Activated CD4-positive, alpha-beta memory T cell treated with anti-CD3 and anti-CD28 coated beads, Interleukin-2, amount 10 ng/mL, durations not matched to agents 7 days and 5 days (primary cell): ENCODE measurements at regions of chr12 and their contacts with region 1.

Region 1: GRCh38 chr12:122123051-122123760 is 44.6 kb downstream of the MLXIP start:
- DNase-seq: peak; percentile 66
- H3K4me3 Mint-ChIP-seq: no peak overlapping the region
- H3K27ac Mint-ChIP-seq: no peak overlapping the region
- H3K4me1 Mint-ChIP-seq: peaks cover 17% of the 10 kb centered on the region
- H3K27me3 Mint-ChIP-seq: no peaks in the 10 kb centered on the region

Region 2: DNA sequence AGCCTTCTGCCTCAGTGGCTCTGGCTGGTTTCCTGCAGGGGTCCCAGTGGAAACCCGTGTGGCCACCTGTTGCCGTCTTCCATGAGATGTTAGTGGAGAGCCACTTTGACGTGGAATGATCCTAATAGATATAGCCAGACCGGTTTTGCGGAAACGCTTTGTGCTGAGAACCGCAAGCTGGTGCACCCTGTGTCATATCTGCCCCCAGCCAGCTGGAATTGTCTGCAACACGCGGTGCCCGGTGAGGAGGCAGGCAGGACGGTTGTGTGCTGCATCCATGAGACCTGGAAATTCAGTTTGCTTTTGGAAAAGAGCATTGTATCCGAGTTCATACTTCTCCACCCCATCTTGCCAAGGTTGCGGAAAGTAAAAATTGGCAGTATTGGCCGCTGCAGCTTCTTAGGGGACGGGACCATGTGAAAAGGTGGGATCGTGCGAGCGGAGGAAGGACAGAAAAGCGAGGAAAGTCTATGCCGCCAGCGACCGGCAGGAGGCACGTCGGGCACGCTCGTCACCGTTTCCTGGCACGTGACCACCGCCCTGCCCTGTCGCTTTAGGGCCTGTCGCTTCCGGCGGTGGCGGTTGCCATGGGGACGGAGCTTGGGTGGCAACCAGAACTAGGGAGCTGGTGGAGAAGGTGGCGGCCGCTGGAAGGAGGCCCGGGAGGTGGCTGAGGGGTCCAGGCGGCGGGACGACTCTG is 205.1 kb before region 1 on chr12 and contains the start of gene CFAP251:
- CTCF ChIA-PET with region 1: interaction called, 10 read pairs
- POLR2A ChIA-PET with region 1: no interaction called
- DNase-seq: peak; percentile 98
- H3K4me3 Mint-ChIP-seq: peak within 1 kb of the TSS; percentile 77
- H3K27ac Mint-ChIP-seq: peak within 1 kb of the TSS; percentile 79
- H3K4me1 Mint-ChIP-seq: peaks cover 14% of the 10 kb centered on the region
- H3K27me3 Mint-ChIP-seq: no peaks in the 10 kb centered on the region
- total RNA-seq, gene CFAP251: 1.9 to 2.2 TPM

Region 3: DNA sequence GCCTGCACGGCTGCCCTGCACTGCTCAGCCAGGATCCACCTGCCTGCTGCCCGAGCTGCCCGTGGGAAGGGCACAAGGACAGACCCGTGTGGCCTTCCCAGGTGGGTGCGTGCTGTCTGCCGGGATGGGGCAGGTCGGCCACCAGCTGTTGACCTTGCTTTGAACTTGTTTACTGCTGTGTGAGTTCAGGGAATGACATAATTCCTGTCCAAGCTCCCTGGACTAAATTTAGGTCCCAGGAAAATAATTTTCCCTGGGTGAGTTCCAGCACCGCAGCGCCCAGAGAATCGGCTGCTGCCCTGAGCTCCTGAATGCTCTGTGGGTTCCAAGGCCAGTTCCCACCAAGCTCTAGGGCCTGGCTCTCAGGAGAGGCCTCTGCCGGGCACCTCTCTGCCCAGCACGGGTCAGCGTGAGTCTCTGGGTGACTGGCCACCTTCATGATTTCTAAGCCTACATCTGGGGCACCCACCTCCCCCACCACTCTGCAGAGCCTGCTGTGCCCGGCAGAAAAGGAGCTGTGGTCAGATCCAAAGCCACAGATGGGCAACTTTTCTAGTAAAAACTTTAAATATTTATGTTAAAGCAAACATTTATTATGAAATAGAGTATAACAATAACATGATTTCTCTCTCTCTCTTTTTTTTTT is 71.9 kb before region 1 on chr12:
- CTCF ChIA-PET with region 1: interaction called, 79 read pairs
- POLR2A ChIA-PET with region 1: interaction called, 3 read pairs
- DNase-seq: no peak
- H3K4me3 Mint-ChIP-seq: no peak overlapping the region
- H3K27ac Mint-ChIP-seq: no peak overlapping the region
- H3K4me1 Mint-ChIP-seq: peaks cover 3% of the 10 kb centered on the region
- H3K27me3 Mint-ChIP-seq: no peaks in the 10 kb centered on the region

Region 4: GRCh38 chr12:122081697-122082221 is 41.4 kb before region 1 on chr12:
- CTCF ChIA-PET with region 1: interaction called, 19 read pairs
- POLR2A ChIA-PET with region 1: no interaction called
- DNase-seq: peak; percentile 51
- H3K4me3 Mint-ChIP-seq: peak overlapping the region; percentile 91
- H3K27ac Mint-ChIP-seq: peak overlapping the region; percentile 84
- H3K4me1 Mint-ChIP-seq: peaks cover 53% of the 10 kb centered on the region
- H3K27me3 Mint-ChIP-seq: no peaks in the 10 kb centered on the region

Region 5: DNA sequence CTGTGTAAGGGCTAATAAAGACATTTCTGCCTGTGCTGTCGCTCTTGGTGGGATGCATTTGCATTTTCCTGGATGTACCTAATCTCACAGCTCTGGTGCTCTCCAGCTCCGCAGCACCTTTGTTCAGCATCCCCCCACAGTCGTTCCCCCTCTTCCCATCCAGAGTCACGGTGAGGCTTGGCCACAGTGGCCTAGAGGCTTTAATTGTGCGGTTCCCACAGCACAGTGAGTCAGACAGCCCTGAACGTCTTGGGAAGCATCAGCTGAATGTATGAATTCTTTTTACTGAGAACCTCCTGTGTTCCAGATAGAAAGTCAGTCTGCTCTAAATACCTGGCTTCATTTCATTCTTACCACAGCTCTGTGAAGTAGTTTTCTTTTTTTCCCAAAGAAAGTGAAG is 15.9 kb before region 1 on chr12:
- CTCF ChIA-PET with region 1: interaction called, 12 read pairs
- POLR2A ChIA-PET with region 1: interaction called, 3 read pairs
- DNase-seq: no peak
- H3K4me3 Mint-ChIP-seq: no peak overlapping the region
- H3K27ac Mint-ChIP-seq: no peak overlapping the region
- H3K4me1 Mint-ChIP-seq: peaks cover 58% of the 10 kb centered on the region
- H3K27me3 Mint-ChIP-seq: no peaks in the 10 kb centered on the region

Region 6: DNA sequence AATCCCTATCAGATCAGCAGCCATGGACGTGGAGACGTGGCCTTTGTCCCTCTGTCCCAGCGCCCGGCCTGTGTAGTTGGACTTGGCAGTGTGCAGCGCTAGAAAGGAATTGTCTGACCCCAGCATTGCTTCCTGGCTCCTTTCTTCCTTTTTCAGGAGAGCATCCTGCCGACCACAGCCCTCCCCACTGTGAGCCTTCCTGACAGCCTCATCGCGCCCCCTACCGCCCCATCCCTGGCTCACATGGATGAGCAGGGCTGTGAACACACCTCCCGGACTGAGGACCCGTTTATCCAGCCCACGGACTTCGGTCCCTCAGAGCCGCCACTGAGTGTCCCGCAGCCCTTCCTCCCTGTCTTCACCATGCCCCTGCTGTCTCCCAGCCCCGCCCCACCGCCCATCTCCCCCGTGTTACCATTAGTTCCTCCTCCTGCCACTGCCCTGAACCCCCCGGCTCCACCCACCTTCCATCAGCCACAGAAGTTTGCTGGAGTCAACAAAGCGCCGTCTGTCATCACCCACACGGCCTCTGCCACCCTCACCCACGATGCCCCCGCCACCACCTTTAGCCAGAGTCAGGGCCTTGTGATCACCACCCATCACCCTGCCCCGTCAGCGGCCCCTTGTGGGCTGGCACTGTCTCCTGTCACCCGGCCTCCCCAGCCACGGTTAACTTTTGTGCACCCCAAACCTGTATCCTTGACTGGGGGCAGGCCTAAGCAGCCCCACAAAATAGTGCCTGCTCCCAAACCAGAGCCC is 10.2 kb after region 1 on chr12:
- CTCF ChIA-PET with region 1: interaction called, 12 read pairs
- POLR2A ChIA-PET with region 1: no interaction called
- DNase-seq: no peak
- H3K4me3 Mint-ChIP-seq: no peak overlapping the region
- H3K27ac Mint-ChIP-seq: no peak overlapping the region
- H3K4me1 Mint-ChIP-seq: no peaks in the 10 kb centered on the region
- H3K27me3 Mint-ChIP-seq: no peaks in the 10 kb centered on the region